Activated CD4-positive, alpha-beta memory T cell treated with anti-CD3 and anti-CD28 coated beads for 36 hours (primary cell): ENCODE measurements at regions of chr20 and their contacts with region 1.

Region 1: GRCh38 chr20:3795511-3796468 is at the start of gene CDC25B:
- DNase-seq: peak; percentile 95
- H3K4me3 Mint-ChIP-seq: peak within 1 kb of the TSS; percentile 95
- H3K27ac Mint-ChIP-seq: peak within 1 kb of the TSS; percentile 98
- H3K4me1 Mint-ChIP-seq: peaks cover 36% of the 10 kb centered on the region
- H3K27me3 Mint-ChIP-seq: no peaks in the 10 kb centered on the region
- total RNA-seq, gene CDC25B: 120 to 128 TPM

Region 2: DNA sequence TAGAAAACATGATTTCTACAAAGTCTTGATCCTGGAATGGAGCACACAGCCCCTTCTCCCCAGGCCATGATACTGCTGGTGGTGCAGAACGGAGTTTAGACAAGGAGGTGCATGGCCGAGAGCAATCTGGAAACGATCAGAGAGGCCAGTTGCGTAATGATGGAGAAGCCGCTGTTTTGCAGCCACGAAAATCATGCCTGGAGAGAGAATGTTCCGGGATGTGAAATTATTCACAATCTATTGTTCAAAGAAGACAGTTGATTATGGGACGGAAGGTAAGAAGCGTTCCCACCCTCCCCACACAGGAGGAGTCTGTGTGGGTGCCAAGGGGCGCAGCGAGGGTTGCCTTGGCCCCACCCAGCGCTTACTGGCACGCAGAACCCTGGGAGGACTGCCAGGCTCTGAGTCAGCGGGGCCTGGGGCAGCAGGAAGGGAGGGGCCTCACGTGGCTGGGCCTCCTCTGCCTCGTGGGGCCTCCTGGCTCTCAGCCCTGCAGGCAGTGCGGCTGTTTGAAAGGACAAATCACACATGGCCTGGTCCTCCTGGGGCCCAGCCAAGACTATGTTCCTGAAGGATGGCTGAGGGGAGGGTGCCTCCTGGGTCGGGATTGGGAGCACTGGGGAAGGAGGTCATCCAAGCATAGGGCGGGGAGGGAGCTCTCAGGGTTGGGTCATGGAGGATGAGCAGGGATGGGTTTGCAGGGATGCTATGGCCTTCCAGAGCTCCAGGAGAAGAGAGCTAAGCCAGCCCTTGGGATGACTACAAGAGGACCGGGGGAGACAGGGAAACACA is 15.9 kb after region 1 on chr20:
- CTCF ChIA-PET with region 1: interaction called, 180 read pairs
- POLR2A ChIA-PET with region 1: interaction called, 7 read pairs
- intact Hi-C with region 1: loop called (anchors 1 kb)
- DNase-seq: peak; percentile 97
- H3K4me3 Mint-ChIP-seq: peak overlapping the region; percentile 82
- H3K27ac Mint-ChIP-seq: peak overlapping the region; percentile 99
- H3K4me1 Mint-ChIP-seq: peaks cover 66% of the 10 kb centered on the region
- H3K27me3 Mint-ChIP-seq: no peaks in the 10 kb centered on the region

Region 3: GRCh38 chr20:3846740-3847428 is 51.1 kb after region 1 on chr20 and contains the start of gene MAVS:
- CTCF ChIA-PET with region 1: no interaction called
- POLR2A ChIA-PET with region 1: no interaction called
- intact Hi-C with region 1: loop called (anchors 2 kb)
- DNase-seq: peak; percentile 89
- H3K4me3 Mint-ChIP-seq: peak within 1 kb of the TSS; percentile 91
- H3K27ac Mint-ChIP-seq: peak within 1 kb of the TSS; percentile 85
- H3K4me1 Mint-ChIP-seq: peaks cover 24% of the 10 kb centered on the region
- H3K27me3 Mint-ChIP-seq: no peaks in the 10 kb centered on the region
- total RNA-seq, gene MAVS: 22.2 to 24.2 TPM

Region 4: GRCh38 chr20:3888622-3889488 is 93.1 kb after region 1 on chr20 and contains the start of gene PANK2:
- CTCF ChIA-PET with region 1: no interaction called
- POLR2A ChIA-PET with region 1: interaction called, 4 read pairs
- intact Hi-C with region 1: loop called (anchors 5 kb)
- DNase-seq: peak; percentile 99
- H3K4me3 Mint-ChIP-seq: peak within 1 kb of the TSS; percentile 92
- H3K27ac Mint-ChIP-seq: peak within 1 kb of the TSS; percentile 97
- H3K4me1 Mint-ChIP-seq: peaks cover 40% of the 10 kb centered on the region
- H3K27me3 Mint-ChIP-seq: no peaks in the 10 kb centered on the region
- total RNA-seq, gene PANK2: 49.3 to 52.5 TPM